Breast epithelium (tissue), 4 donors: ENCODE measurements at regions of chr12 and their contacts with region 1.

Region 1: DNA sequence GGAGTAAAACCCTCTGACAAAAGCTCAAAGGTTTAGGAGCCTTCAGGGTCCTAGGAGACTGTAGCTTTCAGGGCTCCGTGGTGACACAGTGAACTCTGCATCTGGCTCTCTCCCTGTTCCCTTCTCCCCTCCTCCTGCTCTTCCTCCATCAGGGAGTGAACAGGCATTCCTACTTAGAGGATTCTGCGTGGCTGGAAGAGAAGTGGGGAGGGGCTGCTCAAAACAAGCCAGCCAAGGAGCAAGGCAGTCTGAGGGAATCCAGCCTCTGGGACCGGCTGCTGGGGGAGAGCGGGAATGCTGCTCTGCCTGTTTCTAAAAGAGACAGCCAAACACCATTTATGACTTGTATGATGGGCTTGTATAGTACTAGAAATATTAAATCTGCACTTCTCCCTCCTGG is 49.5 kb downstream of the RBMS2 start:
- DNase-seq: no peak
- H3K4me3 ChIP-seq: no peak overlapping the region
- H3K27ac ChIP-seq: peak overlapping the region; percentile 70 to 71
- H3K4me1 ChIP-seq: no peaks in the 10 kb centered on the region
- H3K27me3 ChIP-seq: no peaks in the 10 kb centered on the region
- CTCF ChIP-seq: no peak
- POLR2A ChIP-seq: no peak

Region 2: DNA sequence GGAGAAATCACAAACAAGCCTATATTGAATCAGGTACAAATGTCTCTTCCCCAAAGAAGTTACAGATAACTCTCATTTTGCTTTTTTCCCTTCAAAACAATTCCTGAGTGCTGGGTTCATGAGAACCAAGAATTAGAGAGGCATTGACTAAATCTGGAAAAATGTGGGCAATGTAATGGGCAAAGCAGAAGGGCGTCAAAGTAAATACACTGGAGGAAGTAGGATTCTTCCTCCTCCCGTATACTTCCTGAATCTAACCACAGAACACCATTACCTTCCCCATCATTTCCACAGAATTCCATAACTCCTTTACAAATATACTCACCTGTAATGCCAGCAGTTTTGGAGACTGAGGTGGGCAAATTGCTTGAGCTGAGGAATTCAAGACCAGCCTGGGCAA is 52.6 kb before region 1 on chr12:
- intact Hi-C with region 1: loop called (anchors 10 kb)
- DNase-seq: no peak
- H3K4me3 ChIP-seq: no peak overlapping the region
- H3K27ac ChIP-seq: no peak overlapping the region
- H3K4me1 ChIP-seq: peaks cover under 1 to 4% of the 10 kb centered on the region in 2 donors
- H3K27me3 ChIP-seq: no peaks in the 10 kb centered on the region
- CTCF ChIP-seq: no peak
- POLR2A ChIP-seq: no peak

Region 3: GRCh38 chr12:56657416-56658379 is 86.6 kb after region 1 on chr12:
- intact Hi-C with region 1: no loop called
- DNase-seq: no peak
- H3K4me3 ChIP-seq: no peak overlapping the region
- H3K27ac ChIP-seq: no peak overlapping the region
- H3K4me1 ChIP-seq: no peaks in the 10 kb centered on the region
- H3K27me3 ChIP-seq: no peaks in the 10 kb centered on the region
- CTCF ChIP-seq: no peak
- POLR2A ChIP-seq: no peak